Aorta (tissue), 5 donors: ENCODE measurements at regions of chr4 and their contacts with region 1.

Region 1: GRCh38 chr4:71229477-71230270 is 109.1 kb upstream of the SLC4A4 start:
- DNase-seq: no peak
- ATAC-seq: no peak
- H3K4me3 ChIP-seq: no peak overlapping the region
- H3K27ac ChIP-seq: no peak overlapping the region
- H3K4me1 ChIP-seq: peaks cover 0 to 3% of the 10 kb centered on the region in 2 donors
- H3K27me3 ChIP-seq: no peaks in the 10 kb centered on the region

Region 2: GRCh38 chr4:70943114-70943513 is 286.6 kb before region 1 on chr4:
- intact Hi-C with region 1: no loop called
- DNase-seq: no peak
- ATAC-seq: no peak
- H3K4me3 ChIP-seq: no peak overlapping the region
- H3K27ac ChIP-seq: no peak overlapping the region
- H3K4me1 ChIP-seq: no peaks in the 10 kb centered on the region
- H3K27me3 ChIP-seq: no peaks in the 10 kb centered on the region

Region 3: DNA sequence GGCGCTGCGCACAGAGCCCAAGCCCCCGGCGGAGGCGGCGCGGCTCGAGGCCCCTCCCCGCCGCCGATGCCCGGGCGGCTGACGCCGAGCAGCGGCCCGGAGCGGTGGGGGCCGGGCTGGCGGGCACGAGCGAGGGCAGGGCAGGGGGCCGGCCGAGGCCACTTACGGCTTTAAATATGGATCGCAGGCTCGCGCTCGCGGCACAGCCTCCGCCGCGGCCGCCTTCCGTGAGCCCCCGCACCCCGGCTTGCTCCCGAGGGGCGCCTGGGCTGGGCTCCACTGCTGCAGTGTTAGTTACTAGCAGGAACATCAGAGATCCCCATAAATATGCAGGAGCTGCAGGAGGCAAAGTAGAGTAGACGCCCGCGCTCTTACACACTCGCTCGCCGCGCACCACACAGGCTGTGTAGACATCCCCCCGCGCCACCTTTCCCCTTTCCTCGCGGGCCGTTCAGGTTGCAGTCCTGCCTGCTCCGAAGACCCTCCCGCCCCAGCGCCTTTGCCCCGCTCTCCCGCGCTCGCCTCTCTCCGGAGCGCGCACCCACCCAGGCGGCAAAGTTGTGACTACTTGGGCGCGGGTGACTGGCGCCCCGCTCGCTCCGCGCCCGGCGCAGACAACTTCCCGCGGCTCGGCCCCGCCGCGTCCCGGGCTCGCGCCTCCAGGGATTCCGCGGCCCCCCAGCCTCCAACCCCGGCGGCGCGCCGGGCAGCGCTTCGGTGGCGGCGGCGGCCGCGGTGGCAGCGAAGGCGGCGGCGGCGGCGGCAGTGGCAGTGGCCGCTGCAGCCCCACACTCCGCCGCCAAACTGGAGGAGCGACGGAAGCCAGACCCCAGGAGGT is 42.9 kb before region 1 on chr4:
- intact Hi-C with region 1: loop called in 1 of 2 experiments (anchors 5 kb)
- DNase-seq: peak; percentile 58 to 86
- ATAC-seq: peak; percentile 94
- H3K4me3 ChIP-seq: peak overlapping the region; percentile 45 to 78
- H3K27ac ChIP-seq: peak overlapping the region in 1 of 2 donors; percentile 59
- H3K4me1 ChIP-seq: no peaks in the 10 kb centered on the region
- H3K27me3 ChIP-seq: no peaks in the 10 kb centered on the region

Region 4: GRCh38 chr4:71389149-71389827 is 159.6 kb after region 1 on chr4:
- intact Hi-C with region 1: loop called in 1 of 2 experiments (anchors 10 kb)
- DNase-seq: peak in 1 of 2 donors; percentile 63
- ATAC-seq: peak; percentile 46
- H3K4me3 ChIP-seq: no peak overlapping the region
- H3K27ac ChIP-seq: no peak overlapping the region
- H3K4me1 ChIP-seq: peaks cover 2 to 3% of the 10 kb centered on the region in 2 donors
- H3K27me3 ChIP-seq: no peaks in the 10 kb centered on the region

Region 5: DNA sequence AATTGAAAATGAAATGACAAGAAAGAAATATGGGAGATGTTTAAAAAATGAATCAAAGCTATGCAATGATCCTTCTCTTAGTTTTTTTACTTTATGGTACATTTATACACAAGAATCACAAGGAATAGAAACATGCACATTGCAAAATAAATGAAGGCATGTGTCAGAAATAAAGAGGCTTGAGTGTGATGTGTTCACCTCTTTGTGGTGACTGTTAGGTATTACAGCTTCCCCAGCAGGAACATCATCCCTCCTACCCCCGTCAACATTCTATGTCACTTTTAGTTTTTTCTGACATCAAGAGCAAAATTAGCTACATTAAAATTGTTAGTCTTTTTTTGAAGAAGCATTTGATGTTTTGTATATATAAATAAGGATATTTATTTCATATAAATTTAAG is 323.9 kb after region 1 on chr4:
- intact Hi-C with region 1: loop called in 1 of 2 experiments (anchors 5 kb)
- DNase-seq: no peak
- ATAC-seq: no peak
- H3K4me3 ChIP-seq: no peak overlapping the region
- H3K27ac ChIP-seq: no peak overlapping the region
- H3K4me1 ChIP-seq: no peaks in the 10 kb centered on the region
- H3K27me3 ChIP-seq: no peaks in the 10 kb centered on the region

Region 6: GRCh38 chr4:71713611-71714203 is 484.0 kb after region 1 on chr4:
- intact Hi-C with region 1: loop called in 1 of 2 experiments (anchors 2 kb)
- DNase-seq: no peak
- ATAC-seq: peak; percentile 65
- H3K4me3 ChIP-seq: no peak overlapping the region
- H3K27ac ChIP-seq: no peak overlapping the region
- H3K4me1 ChIP-seq: no peaks in the 10 kb centered on the region
- H3K27me3 ChIP-seq: no peaks in the 10 kb centered on the region